ENCODE measurements at regions of chr18 and their contacts with region 1.

Region 1: GRCh38 chr18:63518178-63519012 is 23.8 kb upstream of the SERPINB12 start:
- DNase-seq: peak; percentile 12 to 83
- ATAC-seq: peak; percentile 92 to 98
- H3K4me3 ChIP-seq: no peak overlapping the region
- H3K27ac ChIP-seq: no peak overlapping the region
- H3K4me1 ChIP-seq: no peaks in the 10 kb centered on the region
- CTCF ChIP-seq: peak; percentile 70
- EP300 ChIP-seq: no peak
- POLR2A ChIP-seq: no peak
- RAD21 ChIP-seq: peak; percentile 74 to 75

Region 2: DNA sequence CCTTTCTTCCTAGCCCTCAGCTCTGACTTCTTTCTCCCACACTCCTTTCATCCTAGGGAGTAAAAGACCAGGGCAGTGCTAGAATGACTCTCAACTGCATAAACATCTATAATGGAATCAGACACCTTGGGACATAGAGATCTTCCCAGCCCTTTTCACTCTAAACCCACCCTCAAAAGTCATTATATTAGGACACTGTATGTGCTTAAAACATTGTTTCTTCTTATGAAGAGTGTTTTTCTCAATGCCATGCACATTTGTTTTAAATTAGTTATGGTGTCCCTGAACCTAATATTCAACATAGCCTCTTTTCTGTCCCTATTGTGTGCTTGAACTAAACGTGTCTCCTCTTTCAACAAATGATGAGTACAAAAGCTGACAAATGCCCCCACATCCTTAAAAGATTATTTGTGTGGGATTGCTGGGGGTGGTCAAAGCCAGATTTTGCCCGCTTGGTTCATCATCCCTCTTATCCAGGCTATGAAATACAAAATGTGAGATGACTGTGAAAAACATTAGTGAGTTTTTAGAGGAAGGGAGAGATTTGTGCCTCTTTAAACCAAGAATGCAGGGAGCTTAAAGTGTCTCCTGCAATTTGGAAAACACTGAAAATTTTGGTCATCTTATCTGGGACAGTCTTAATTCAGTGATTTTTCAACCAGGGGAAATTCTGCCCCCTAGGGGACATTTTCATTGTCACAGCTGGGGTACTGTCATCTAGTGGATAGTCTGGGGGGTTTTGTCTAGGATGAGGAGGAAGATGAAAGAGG is 12.6 kb before region 1 on chr18:
- CTCF ChIA-PET with region 1: interaction called, 14 read pairs
- POLR2A ChIA-PET with region 1: no interaction called
- DNase-seq: peak; percentile 15 to 44
- ATAC-seq: peak; percentile 76 to 80; a peak in 3 of 6 replicates
- H3K4me3 ChIP-seq: no peak overlapping the region
- H3K27ac ChIP-seq: no peak overlapping the region
- H3K4me1 ChIP-seq: no peaks in the 10 kb centered on the region
- CTCF ChIP-seq: peak; percentile 47
- EP300 ChIP-seq: no peak
- POLR2A ChIP-seq: no peak
- RAD21 ChIP-seq: peak; percentile 36 to 44; a peak in 4 of 5 replicates

Region 3: DNA sequence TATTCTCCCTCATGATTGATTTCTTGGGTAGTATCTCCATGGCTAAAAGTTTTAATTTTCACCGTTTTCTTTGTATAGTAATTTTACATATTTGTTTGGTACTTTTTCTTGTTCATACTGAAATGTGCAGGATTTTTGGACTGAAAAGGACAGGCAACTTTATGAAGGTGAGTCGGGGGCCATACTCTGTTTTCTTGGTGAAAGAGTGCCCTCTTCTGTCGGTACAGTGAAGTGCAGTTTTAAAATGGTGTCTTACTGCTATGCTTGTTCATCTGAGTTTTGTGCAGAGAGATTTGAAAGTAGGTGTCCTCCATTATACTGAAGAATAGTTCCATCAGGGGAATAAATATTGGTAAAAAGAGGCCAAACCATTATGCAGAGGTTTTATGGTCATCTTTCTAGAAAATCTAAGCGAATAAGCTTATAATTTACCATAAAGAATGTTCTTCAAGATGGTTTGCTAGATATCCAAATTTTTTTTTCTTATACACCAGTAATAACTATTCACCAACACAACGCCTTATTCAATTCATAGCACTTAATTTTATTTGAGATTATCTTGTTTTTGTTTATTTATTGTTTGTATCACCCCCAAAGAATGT is 60.1 kb after region 1 on chr18:
- CTCF ChIA-PET with region 1: interaction called, 21 read pairs
- POLR2A ChIA-PET with region 1: no interaction called
- DNase-seq: peak in 1 of 2 experiments; percentile 37
- ATAC-seq: peak in 1 of 2 experiments; percentile 57; a peak in 3 of 6 replicates
- H3K4me3 ChIP-seq: no peak overlapping the region
- H3K27ac ChIP-seq: no peak overlapping the region
- H3K4me1 ChIP-seq: no peaks in the 10 kb centered on the region
- CTCF ChIP-seq: peak; percentile 50
- EP300 ChIP-seq: no peak
- POLR2A ChIP-seq: no peak
- RAD21 ChIP-seq: peak; percentile 42 to 68; a peak in 4 of 5 replicates

Region 4: DNA sequence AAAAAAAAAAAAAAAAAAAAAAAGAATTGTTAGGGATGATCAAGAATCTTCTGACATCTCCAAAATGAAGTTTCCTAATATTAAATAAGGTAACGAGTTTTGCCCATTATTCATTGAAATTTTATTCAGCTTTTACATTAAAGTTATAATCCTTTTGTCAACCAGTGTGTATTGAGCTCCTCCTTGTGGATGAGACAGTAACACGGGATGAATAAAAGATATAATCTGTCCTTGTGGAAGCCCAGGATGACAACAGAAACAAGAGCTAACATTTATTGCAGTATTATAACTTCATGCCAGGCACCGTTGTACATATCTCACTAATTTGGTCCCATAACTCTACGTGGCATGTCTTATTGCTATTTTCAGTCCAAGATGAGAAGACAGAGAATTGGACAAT is 223.4 kb after region 1 on chr18:
- CTCF ChIA-PET with region 1: interaction called, 22 read pairs
- POLR2A ChIA-PET with region 1: no interaction called
- DNase-seq: peak in 1 of 2 experiments; percentile 55
- ATAC-seq: peak in 1 of 2 experiments; percentile 42; a peak in 1 of 6 replicates
- H3K4me3 ChIP-seq: no peak overlapping the region
- H3K27ac ChIP-seq: no peak overlapping the region
- H3K4me1 ChIP-seq: 0 out of 3 replicates have a peak, but pooled peaks cover 5% of the 10 kb centered on the region
- CTCF ChIP-seq: peak; percentile 22; the same call in 2 of the 3 replicates
- EP300 ChIP-seq: no peak
- POLR2A ChIP-seq: no peak
- RAD21 ChIP-seq: peak; percentile 55 to 72

Region 5: DNA sequence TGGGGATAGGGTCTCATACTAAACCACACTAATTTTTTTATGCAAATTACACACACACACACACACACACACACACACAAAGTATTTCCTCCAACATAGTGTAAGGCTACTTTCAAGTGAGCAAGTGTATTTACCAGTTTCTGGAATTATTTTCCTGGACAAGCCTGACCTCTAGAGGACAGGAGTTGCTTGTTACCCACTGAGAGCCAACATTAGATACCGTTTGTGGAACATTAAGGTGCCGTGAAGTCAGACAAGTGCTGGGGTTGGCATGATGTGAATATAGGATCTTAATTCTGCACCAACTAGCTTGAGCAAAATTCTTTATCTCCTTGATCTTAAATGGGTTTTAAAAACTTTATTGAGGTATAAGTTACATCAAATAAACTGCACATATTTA is 329.8 kb after region 1 on chr18:
- CTCF ChIA-PET with region 1: interaction called, 21 read pairs
- POLR2A ChIA-PET with region 1: no interaction called
- DNase-seq: peak; percentile 7 to 70
- ATAC-seq: peak; percentile 80 to 84; a peak in 4 of 6 replicates
- H3K4me3 ChIP-seq: no peak overlapping the region
- H3K27ac ChIP-seq: no peak overlapping the region
- H3K4me1 ChIP-seq: no peaks in the 10 kb centered on the region
- CTCF ChIP-seq: peak; percentile 54
- EP300 ChIP-seq: no peak
- POLR2A ChIP-seq: no peak
- RAD21 ChIP-seq: peak; percentile 65 to 70

Region 6: GRCh38 chr18:63936156-63936931 is 417.9 kb after region 1 on chr18:
- CTCF ChIA-PET with region 1: interaction called, 11 read pairs
- POLR2A ChIA-PET with region 1: no interaction called
- DNase-seq: peak; percentile 57 to 75
- ATAC-seq: peak; percentile 99 to 100
- H3K4me3 ChIP-seq: peak overlapping the region; percentile 58
- H3K27ac ChIP-seq: peak overlapping the region; percentile 49 to 71; a peak in 4 of 6 replicates
- H3K4me1 ChIP-seq: no peaks in the 10 kb centered on the region
- CTCF ChIP-seq: peak; percentile 45
- EP300 ChIP-seq: no peak
- POLR2A ChIP-seq: no peak
- RAD21 ChIP-seq: peak; percentile 60 to 62

Measured in A549 (cell line).